Spleen (tissue), 13 donors: ENCODE measurements at regions of chr19 and their contacts with region 1.

Region 1: GRCh38 chr19:35204799-35205732 is 23.5 kb downstream of the FAM187B start:
- DNase-seq: peak; percentile 80
- H3K4me3 ChIP-seq: no peak overlapping the region
- H3K27ac ChIP-seq: peak overlapping the region; percentile 61 to 98 (median 84)
- H3K4me1 ChIP-seq: peaks cover 24 to 65% (median 50%) of the 10 kb centered on the region in 6 donors
- H3K27me3 ChIP-seq: no peaks in the 10 kb centered on the region
- CTCF ChIP-seq: no peak
- POLR2A ChIP-seq: no peak

Region 2: DNA sequence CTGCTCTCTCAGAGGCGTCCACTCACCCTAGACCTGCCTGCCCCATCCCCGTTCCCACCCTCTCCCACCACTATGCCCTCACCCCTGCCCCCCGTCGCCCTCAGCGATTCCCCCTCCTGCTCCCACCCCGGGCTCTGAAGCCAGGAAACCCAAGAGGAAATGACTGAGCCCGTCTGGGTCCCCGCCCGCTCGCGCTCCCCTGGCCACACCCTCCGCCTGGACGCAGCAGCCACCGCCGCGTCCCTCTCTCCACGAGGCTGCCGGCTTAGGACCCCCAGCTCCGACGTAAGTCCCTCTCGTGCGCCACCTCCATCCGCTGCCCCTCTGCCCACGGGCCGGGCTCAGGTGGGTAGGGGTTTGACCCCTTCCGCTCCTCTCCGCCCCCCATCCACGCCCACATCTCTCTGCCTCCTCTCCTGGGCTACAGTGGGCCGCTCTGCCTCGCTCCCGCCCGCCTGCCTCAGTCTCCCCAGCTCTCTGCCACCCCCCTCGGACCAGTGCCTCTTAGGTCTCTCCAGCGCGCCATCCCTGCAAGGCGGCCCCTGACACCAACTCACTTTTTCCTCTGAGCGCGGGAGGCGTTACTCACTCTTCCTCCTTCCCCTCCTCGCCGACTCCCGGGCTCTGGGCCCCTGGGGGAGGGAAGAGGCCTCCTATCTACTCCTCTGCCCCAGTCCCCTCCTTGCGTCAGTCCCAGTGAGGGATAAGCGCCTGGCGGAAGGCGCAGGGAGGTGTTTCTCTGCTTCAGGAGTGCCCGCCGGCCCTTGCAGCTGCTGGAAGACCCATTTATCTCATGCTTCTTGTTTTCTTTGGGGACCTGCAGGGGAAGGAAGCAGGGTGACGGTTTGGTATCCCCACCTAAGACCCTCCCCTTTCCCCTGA is 50.3 kb before region 1 on chr19 and contains the start of gene FXYD5:
- intact Hi-C with region 1: loop called (anchors 10 kb)
- DNase-seq: peak; percentile 95
- H3K4me3 ChIP-seq: peak within 1 kb of the TSS; percentile 56 to 92 (median 72)
- H3K27ac ChIP-seq: peak within 1 kb of the TSS; percentile 77 to 98 (median 89)
- H3K4me1 ChIP-seq: peaks cover 5 to 58% (median 36%) of the 10 kb centered on the region in 6 donors
- H3K27me3 ChIP-seq: peaks cover 0 to 6% (median 0%) of the 10 kb centered on the region in 7 donors
- CTCF ChIP-seq: peak in 4 of 11 experiments; percentile 12 to 19 (median 16)
- POLR2A ChIP-seq: no peak
- total RNA-seq, gene FXYD5: 132 to 215 (median 162) TPM

Region 3: GRCh38 chr19:35269421-35270117 is 64.5 kb after region 1 on chr19:
- intact Hi-C with region 1: no loop called
- DNase-seq: peak; percentile 97
- H3K4me3 ChIP-seq: peak overlapping the region; percentile 53 to 90 (median 64)
- H3K27ac ChIP-seq: peak overlapping the region; percentile 87 to 97 (median 94)
- H3K4me1 ChIP-seq: peaks cover 32 to 81% (median 66%) of the 10 kb centered on the region in 6 donors
- H3K27me3 ChIP-seq: no peaks in the 10 kb centered on the region
- CTCF ChIP-seq: peak; percentile 38 to 95 (median 91)
- POLR2A ChIP-seq: no peak